ENCODE measurements at regions of chr4 and their contacts with region 1.

Region 1: DNA sequence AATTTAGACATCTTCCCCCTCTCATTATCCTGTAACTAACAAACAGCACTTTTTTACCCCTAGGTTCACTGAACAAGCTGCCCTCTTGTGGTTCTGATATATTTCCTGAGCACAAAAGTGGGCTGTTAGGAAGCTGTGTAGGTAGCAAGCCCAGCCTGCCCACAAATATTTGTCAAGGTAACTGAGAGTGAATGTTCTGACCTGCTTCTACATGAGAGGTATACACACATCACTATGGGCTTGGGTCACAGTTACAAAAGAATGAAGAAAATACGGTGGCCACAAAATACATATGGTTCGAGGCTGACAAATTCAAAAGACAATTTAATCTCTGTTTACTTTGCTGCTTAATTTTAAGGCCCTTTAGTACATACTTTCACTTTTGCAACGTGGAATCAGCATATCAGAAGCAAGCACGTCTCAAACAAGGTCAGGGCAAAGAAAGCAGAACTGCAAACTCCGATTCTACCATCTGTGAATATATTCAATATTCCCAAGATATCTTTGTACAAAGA is 78.7 kb downstream of the RBM47 start:
- DNase-seq: peak; percentile 38
- H3K4me3 ChIP-seq: peak overlapping the region; percentile 22
- H3K27ac ChIP-seq: peak overlapping the region; percentile 84
- H3K4me1 ChIP-seq: peaks cover 10% of the 10 kb centered on the region
- H3K27me3 ChIP-seq: no peaks in the 10 kb centered on the region
- CTCF ChIP-seq: peak; percentile 15

Region 2: DNA sequence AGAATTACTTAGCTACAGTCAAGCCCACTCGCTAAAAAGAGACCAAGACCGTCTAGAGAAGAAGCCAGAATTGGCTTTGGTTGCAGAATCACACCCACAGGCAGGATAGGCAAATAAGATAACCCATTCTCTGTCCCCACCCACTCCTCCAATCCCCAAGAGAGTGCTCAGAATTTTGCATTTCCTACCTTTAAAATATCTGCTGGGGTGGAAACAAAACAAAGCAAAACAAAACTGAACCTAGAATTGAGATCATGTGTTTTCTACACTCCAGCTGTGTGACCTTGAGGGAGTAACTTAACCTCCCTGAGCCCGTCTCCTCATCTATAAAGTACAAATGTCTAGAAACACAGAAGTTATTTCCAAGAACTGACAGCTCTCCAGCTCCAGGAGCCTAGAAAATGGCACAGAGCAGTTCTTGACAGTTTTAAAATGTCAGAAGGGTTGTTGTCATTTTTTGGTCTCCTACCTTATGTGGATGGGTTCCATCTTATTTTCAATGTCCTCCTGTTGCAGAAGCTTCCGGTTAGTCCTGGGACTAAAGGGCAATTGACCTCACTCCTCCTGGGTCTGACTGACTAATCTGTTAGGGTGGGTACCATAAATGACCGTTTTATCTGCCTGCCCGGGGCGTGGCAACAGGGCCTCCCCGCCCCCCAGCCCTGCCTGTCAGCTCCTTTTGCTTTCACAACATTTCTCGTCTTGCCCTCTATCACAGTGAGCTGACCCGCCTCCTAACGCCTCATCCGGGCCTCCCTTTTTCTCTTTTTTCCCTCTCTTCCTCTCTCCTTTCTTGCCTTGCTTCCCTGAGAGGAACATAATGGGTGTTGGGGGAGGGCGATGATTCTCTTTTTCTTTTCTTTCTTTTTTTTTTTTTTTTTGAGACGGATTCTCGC is 35.4 kb before region 1 on chr4:
- intact Hi-C with region 1: loop called (anchors 5 kb)
- DNase-seq: peak; percentile 87
- H3K4me3 ChIP-seq: peak overlapping the region; percentile 46
- H3K27ac ChIP-seq: peak overlapping the region; percentile 87
- H3K4me1 ChIP-seq: no peaks in the 10 kb centered on the region
- H3K27me3 ChIP-seq: no peaks in the 10 kb centered on the region
- CTCF ChIP-seq: no peak

Region 3: GRCh38 chr4:40719008-40719623 is 168.1 kb after region 1 on chr4:
- intact Hi-C with region 1: loop called (anchors 10 kb)
- DNase-seq: peak; percentile 50
- H3K4me3 ChIP-seq: no peak overlapping the region
- H3K27ac ChIP-seq: peak overlapping the region; percentile 67
- H3K4me1 ChIP-seq: peaks cover 8% of the 10 kb centered on the region
- H3K27me3 ChIP-seq: no peaks in the 10 kb centered on the region
- CTCF ChIP-seq: peak; percentile 29